K562 (cell line): ENCODE measurements at regions of chr6 and their contacts with region 1.

Region 1: GRCh38 chr6:3356056-3356761 is 97.5 kb downstream of the PSMG4 start:
- DNase-seq: peak; percentile 78 to 96 (median 94)
- ATAC-seq: peak; percentile 60
- H3K4me3 ChIP-seq: peak overlapping the region; percentile 14; the same call in 1 of the 2 replicates
- H3K27ac ChIP-seq: peak overlapping the region; percentile 96
- H3K4me1 ChIP-seq: peaks cover 30 to 56% of the 10 kb centered on the region in 2 experiments
- H3K27me3 ChIP-seq: no peaks in the 10 kb centered on the region
- CTCF ChIP-seq: no peak
- EP300 ChIP-seq: 0 out of 2 replicates have a peak, but pooled peaks have one; percentile 17
- POLR2A ChIP-seq: no peak
- RAD21 ChIP-seq: no peak

Region 2: GRCh38 chr6:3390698-3391097 is 34.5 kb after region 1 on chr6:
- CTCF ChIA-PET with region 1: no interaction called
- POLR2A ChIA-PET with region 1: interaction called, 4 read pairs
- in situ Hi-C with region 1: no loop called
- intact Hi-C with region 1: loop called (anchors 2 kb)
- DNase-seq: peak; percentile 60 to 82 (median 80)
- ATAC-seq: peak; percentile 40
- H3K4me3 ChIP-seq: no peak overlapping the region
- H3K27ac ChIP-seq: peak overlapping the region; percentile 53; the same call in 2 of the 3 replicates
- H3K4me1 ChIP-seq: peaks cover 48 to 52% of the 10 kb centered on the region in 2 experiments
- H3K27me3 ChIP-seq: no peaks in the 10 kb centered on the region
- CTCF ChIP-seq: no peak
- EP300 ChIP-seq: peak; percentile 64; the same call in 1 of the 2 replicates
- POLR2A ChIP-seq: no peak
- RAD21 ChIP-seq: no peak